B cell (primary cell): ENCODE measurements at regions of chr13 and their contacts with region 1.

Region 1: GRCh38 chr13:43232874-43233266 is 209.5 kb downstream of the DNAJC15 start:
- DNase-seq: no peak
- ATAC-seq: no peak
- H3K4me3 ChIP-seq: no peak overlapping the region
- H3K4me3 Mint-ChIP-seq: no peak overlapping the region
- H3K27ac ChIP-seq: no peak overlapping the region
- H3K27ac Mint-ChIP-seq: no peak overlapping the region
- H3K4me1 ChIP-seq: no peaks in the 10 kb centered on the region
- H3K4me1 Mint-ChIP-seq: no peaks in the 10 kb centered on the region
- H3K27me3 ChIP-seq: no peaks in the 10 kb centered on the region
- H3K27me3 Mint-ChIP-seq: peaks cover 7% of the 10 kb centered on the region
- CTCF ChIP-seq: no peak

Region 2: GRCh38 chr13:42883771-42884467 is 349.0 kb before region 1 on chr13:
- CTCF ChIA-PET with region 1: no interaction called
- POLR2A ChIA-PET with region 1: no interaction called
- intact Hi-C with region 1: no loop called
- DNase-seq: no peak
- ATAC-seq: no peak
- H3K4me3 ChIP-seq: no peak overlapping the region
- H3K4me3 Mint-ChIP-seq: no peak overlapping the region
- H3K27ac ChIP-seq: no peak overlapping the region
- H3K27ac Mint-ChIP-seq: no peak overlapping the region
- H3K4me1 ChIP-seq: no peaks in the 10 kb centered on the region
- H3K4me1 Mint-ChIP-seq: peaks cover 5% of the 10 kb centered on the region
- H3K27me3 ChIP-seq: no peaks in the 10 kb centered on the region
- H3K27me3 Mint-ChIP-seq: peaks cover 7% of the 10 kb centered on the region
- CTCF ChIP-seq: no peak

Region 3: DNA sequence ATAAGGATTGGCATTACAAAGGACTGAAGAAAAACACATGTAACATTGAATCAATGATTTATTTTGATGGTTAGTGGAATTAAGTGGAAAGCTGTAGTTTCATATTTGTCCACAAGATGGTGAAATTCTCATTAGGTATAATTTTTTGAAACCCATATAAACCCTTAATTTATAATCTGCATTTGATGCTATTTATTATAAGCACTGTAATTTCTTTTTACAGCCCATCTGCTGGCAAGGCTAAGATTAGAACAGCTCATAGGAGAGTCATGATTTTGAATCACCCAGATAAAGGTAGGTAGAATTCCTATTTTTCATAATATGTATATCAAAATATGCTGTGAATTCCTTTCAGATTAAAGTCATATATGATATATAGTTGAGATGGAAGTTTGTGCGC is 147.3 kb before region 1 on chr13:
- CTCF ChIA-PET with region 1: no interaction called
- POLR2A ChIA-PET with region 1: no interaction called
- intact Hi-C with region 1: no loop called
- DNase-seq: peak; percentile 41
- ATAC-seq: no peak
- H3K4me3 ChIP-seq: no peak overlapping the region
- H3K4me3 Mint-ChIP-seq: no peak overlapping the region
- H3K27ac ChIP-seq: no peak overlapping the region
- H3K27ac Mint-ChIP-seq: no peak overlapping the region
- H3K4me1 ChIP-seq: peaks cover 0 to 6% of the 10 kb centered on the region in 2 donors
- H3K4me1 Mint-ChIP-seq: peaks cover 18% of the 10 kb centered on the region
- H3K27me3 ChIP-seq: no peaks in the 10 kb centered on the region
- H3K27me3 Mint-ChIP-seq: no peaks in the 10 kb centered on the region
- CTCF ChIP-seq: peak; percentile 78

Region 4: GRCh38 chr13:43170506-43170905 is 62.4 kb before region 1 on chr13:
- CTCF ChIA-PET with region 1: no interaction called
- POLR2A ChIA-PET with region 1: no interaction called
- intact Hi-C with region 1: loop called (anchors 2 kb)
- DNase-seq: no peak
- ATAC-seq: no peak
- H3K4me3 ChIP-seq: no peak overlapping the region
- H3K4me3 Mint-ChIP-seq: no peak overlapping the region
- H3K27ac ChIP-seq: no peak overlapping the region
- H3K27ac Mint-ChIP-seq: no peak overlapping the region
- H3K4me1 ChIP-seq: no peaks in the 10 kb centered on the region
- H3K4me1 Mint-ChIP-seq: no peaks in the 10 kb centered on the region
- H3K27me3 ChIP-seq: peaks cover 0 to 3% (median 0%) of the 10 kb centered on the region in 4 experiments
- H3K27me3 Mint-ChIP-seq: peaks cover 16% of the 10 kb centered on the region
- CTCF ChIP-seq: no peak

Region 5: GRCh38 chr13:43245374-43245964 is 12.6 kb after region 1 on chr13:
- CTCF ChIA-PET with region 1: no interaction called
- POLR2A ChIA-PET with region 1: no interaction called
- intact Hi-C with region 1: no loop called
- DNase-seq: no peak
- ATAC-seq: no peak
- H3K4me3 ChIP-seq: no peak overlapping the region
- H3K4me3 Mint-ChIP-seq: no peak overlapping the region
- H3K27ac ChIP-seq: no peak overlapping the region
- H3K27ac Mint-ChIP-seq: no peak overlapping the region
- H3K4me1 ChIP-seq: peaks cover under 1 to 2% of the 10 kb centered on the region in 2 donors
- H3K4me1 Mint-ChIP-seq: peaks cover 3% of the 10 kb centered on the region
- H3K27me3 ChIP-seq: peaks cover 0 to 6% (median 0%) of the 10 kb centered on the region in 4 experiments
- H3K27me3 Mint-ChIP-seq: peaks cover 11% of the 10 kb centered on the region
- CTCF ChIP-seq: no peak